ENCODE measurements at regions of chr10 and their contacts with region 1.

Region 1: DNA sequence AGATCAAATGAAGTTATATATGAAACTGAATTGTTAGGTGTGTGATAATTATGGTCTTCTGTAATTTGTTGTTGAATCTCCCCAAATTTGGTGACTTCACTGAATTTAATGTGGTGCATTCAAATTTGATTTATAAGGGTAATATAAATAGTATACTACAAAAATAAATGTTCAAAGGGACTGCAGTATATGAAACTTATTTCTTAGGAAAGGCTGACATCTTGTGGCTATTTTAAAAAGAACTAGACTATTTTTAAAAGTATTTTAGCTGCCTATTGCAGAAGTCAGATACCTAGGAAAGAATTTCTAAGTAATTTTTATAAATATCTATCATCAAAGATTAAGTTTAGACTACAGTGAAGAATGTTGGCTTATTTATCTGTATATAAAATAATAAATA is 36.6 kb downstream of the ATRNL1 start:
- DNase-seq: no peak
- ATAC-seq: no peak
- H3K4me3 ChIP-seq: no peak overlapping the region
- H3K27ac ChIP-seq: no peak overlapping the region
- H3K4me1 ChIP-seq: no peaks in the 10 kb centered on the region
- H3K27me3 ChIP-seq: no peaks in the 10 kb centered on the region

Region 2: DNA sequence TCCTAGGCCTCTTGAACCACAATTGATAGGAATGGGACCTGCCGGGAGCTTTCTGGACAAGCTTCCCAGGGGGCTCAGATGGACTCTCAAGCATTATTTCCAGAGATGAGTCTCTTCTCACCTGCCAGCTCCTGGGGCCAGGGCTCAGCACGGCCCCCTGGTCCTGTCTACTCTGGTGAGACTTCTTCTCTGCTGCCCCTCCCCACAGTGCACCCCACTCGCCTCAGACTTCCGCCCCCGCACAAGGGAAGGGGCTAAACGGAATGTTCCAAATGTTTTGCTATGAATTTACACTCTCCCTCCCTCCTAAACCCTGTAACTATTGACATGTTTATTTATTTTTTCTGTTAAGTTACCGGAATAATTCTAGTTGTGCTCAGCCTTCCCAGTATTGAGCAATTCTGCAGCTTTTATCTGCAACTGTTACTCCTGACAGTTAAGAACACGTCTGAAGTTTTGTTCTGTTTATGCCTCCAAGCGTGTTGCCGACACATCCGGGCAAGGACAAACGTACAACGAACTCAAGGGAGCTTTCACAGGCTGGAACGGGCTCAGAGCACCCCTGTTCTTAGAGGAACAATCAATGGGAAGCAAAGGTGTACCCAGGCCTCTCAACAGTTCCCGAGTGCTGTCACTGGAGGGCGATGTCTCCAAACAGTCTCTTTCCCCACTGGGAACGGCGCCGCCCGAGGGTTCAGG is 253.0 kb before region 1 on chr10:
- intact Hi-C with region 1: loop called (anchors 2 to 5 kb)
- DNase-seq: peak; percentile 69 to 87
- ATAC-seq: no peak
- H3K4me3 ChIP-seq: no peak overlapping the region
- H3K27ac ChIP-seq: no peak overlapping the region
- H3K4me1 ChIP-seq: no peaks in the 10 kb centered on the region
- H3K27me3 ChIP-seq: no peaks in the 10 kb centered on the region